ENCODE measurements at regions of chr12 and their contacts with region 1.

Region 1: DNA sequence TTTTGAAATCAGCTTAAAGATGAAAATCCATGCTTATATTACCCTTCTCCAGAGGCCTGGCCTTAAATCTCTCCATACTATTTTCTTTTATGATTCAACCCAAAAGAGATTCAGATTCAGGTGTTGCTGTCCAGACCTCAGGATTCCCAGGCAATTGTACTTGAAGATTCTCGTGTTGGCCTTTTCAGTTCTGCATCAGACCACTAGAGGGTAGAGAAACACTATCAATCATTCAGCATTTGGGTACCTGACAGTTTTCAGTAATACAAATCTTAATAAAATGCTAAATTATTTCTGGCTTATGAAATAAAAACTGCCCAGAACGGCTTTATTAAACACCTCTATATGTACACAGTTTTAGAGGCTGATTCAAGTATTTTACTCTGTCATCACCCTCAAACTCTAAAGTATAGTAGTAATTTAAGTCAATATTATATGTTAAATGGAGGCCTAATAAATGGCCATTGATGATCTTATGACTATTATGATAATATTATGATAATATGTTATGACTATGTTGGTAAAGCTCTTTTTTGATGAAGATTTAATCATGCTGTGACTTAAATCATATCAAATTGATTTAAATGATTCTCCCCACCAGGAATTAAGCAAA is 301.1 kb downstream of the DUSP6 start:
- DNase-seq: peak in 1 of 2 donors; percentile 84
- H3K4me3 ChIP-seq: no peak overlapping the region
- H3K27ac ChIP-seq: no peak overlapping the region
- H3K4me1 ChIP-seq: peaks cover 0 to 5% (median 0%) of the 10 kb centered on the region in 4 donors
- H3K27me3 ChIP-seq: no peaks in the 10 kb centered on the region
- CTCF ChIP-seq: peak in 6 of 7 experiments; percentile 28 to 95 (median 90)
- EP300 ChIP-seq: no peak
- POLR2A ChIP-seq: no peak

Region 2: GRCh38 chr12:89461649-89462612 is 410.8 kb after region 1 on chr12:
- intact Hi-C with region 1: loop called (anchors 5 kb)
- DNase-seq: peak in 1 of 2 donors; percentile 71
- H3K4me3 ChIP-seq: peak overlapping the region in 3 of 4 donors; percentile 3 to 19 (median 14)
- H3K27ac ChIP-seq: peak overlapping the region in 2 of 5 donors; percentile 45 to 48
- H3K4me1 ChIP-seq: peaks cover 0 to 15% (median 7%) of the 10 kb centered on the region in 4 donors
- H3K27me3 ChIP-seq: no peaks in the 10 kb centered on the region
- CTCF ChIP-seq: peak in 5 of 7 experiments; percentile 26 to 84 (median 61)
- EP300 ChIP-seq: no peak
- POLR2A ChIP-seq: no peak

Measured in stomach (tissue), 19 donors.